GM10248 (cell line): ENCODE measurements at regions of chr3 and their contacts with region 1.

Region 1: DNA sequence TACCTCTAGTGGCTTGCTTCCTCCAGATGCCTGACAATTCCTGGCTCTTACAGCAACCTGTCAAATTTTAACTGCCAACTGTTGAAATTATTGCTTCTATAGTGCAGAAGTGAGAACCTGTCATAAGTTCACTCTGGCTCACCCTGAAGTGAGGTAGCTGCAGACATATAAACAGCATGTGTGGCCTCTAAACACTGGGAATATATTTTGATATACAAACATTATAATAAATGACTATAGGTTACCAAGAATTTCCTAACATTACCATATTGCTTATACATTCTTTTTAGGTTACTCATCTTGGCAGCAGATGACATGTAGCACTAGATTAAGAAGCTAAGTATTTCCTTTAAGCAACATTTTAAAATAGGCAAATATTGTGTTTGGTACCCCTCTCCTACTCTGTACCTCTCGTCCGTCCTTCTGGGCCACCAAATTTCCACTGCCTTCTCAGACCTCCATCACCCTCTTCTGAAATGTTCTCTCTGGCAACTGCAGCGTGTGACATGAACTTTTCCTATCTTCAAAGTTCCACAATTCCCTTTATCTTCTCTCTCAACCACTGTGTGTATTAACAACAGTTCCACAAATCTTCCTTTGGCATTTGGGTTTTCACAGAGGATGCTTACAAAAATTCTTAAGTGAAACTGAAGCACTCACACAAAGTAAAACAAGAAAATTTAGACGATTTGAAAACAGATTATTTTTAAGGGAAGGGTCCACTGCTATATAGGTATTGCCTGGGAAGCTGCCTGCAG is 15.3 kb upstream of the XXYLT1 start:
- DNase-seq: no peak
- CTCF ChIP-seq: no peak

Region 2: DNA sequence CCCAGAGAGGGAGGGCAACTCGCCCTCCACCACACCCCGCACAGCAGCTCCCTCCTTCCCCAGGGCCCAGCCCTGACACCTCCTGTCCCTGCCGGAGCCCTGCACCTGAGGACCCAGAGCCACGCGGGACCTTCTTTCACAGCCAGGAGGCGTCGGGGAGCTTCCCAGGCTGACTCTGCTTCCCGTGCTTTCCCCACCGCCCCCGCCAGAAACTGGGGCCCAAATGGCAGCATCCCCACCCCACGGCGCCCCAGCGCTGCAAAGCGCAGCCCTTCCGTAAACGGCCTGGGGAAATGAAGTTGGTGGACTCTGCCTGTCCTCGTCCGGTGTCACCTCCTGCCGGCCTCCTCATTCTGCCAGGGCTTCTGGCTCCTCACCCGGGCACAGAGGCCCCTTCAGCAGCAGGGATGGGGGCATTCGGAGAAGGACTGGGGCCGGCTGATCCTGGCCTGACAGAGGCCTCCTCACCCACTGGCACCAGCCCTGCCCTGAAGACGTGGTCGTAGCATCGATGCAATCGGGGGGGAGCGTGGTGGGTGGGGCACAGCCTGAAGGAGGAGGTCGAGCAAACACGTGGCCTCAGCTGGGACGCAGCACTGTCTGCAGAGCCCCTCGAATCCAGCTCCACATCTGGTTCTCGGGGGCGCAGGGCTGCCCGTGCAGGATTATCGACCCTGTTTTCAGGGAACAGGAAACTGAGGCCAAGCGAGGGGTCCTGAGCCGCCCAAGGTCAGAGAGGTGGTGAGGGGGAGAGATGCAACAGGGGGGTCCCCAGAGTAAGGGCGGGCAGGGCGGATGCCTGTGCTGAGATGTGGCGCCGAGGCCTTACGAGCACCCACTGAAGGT is 250.7 kb before region 1 on chr3:
- CTCF ChIA-PET with region 1: no interaction called
- POLR2A ChIA-PET with region 1: no interaction called
- DNase-seq: no peak
- CTCF ChIP-seq: no peak

Region 3: GRCh38 chr3:195297446-195297845 is 11.2 kb after region 1 on chr3:
- CTCF ChIA-PET with region 1: interaction called, 10 read pairs
- POLR2A ChIA-PET with region 1: no interaction called
- DNase-seq: no peak
- CTCF ChIP-seq: no peak